ENCODE measurements at regions of chr15 and their contacts with region 1.

Region 1: GRCh38 chr15:56342653-56343052 is 22.6 kb upstream of the TEX9 start:
- DNase-seq: peak; percentile 70
- H3K4me3 Mint-ChIP-seq: no peak overlapping the region
- H3K27ac Mint-ChIP-seq: peak overlapping the region; percentile 10
- H3K4me1 Mint-ChIP-seq: peaks cover 35% of the 10 kb centered on the region
- H3K27me3 Mint-ChIP-seq: no peaks in the 10 kb centered on the region
- CTCF ChIP-seq: no peak

Region 2: DNA sequence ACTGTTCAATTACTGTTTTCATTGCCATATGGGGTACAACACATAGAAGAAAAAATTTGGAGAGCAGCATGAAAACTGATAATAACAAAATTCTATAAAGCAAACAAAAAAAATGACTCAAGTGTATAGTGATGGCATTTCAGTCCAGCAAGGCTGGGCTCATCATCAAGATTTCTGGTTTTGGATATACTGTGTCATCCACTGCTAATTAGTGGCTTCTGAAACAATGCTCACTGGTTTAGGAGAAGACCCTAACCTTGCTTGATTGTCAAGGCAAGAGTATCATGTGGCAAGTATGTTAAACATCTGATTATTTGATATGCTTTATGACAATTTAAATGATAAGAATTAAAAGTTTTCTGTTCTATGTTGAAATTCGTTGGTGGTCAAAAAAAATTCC is 195.9 kb before region 1 on chr15:
- CTCF ChIA-PET with region 1: no interaction called
- POLR2A ChIA-PET with region 1: no interaction called
- intact Hi-C with region 1: no loop called
- DNase-seq: no peak
- H3K4me3 Mint-ChIP-seq: no peak overlapping the region
- H3K27ac Mint-ChIP-seq: no peak overlapping the region
- H3K4me1 Mint-ChIP-seq: peaks cover 20% of the 10 kb centered on the region
- H3K27me3 Mint-ChIP-seq: no peaks in the 10 kb centered on the region
- CTCF ChIP-seq: no peak

Region 3: DNA sequence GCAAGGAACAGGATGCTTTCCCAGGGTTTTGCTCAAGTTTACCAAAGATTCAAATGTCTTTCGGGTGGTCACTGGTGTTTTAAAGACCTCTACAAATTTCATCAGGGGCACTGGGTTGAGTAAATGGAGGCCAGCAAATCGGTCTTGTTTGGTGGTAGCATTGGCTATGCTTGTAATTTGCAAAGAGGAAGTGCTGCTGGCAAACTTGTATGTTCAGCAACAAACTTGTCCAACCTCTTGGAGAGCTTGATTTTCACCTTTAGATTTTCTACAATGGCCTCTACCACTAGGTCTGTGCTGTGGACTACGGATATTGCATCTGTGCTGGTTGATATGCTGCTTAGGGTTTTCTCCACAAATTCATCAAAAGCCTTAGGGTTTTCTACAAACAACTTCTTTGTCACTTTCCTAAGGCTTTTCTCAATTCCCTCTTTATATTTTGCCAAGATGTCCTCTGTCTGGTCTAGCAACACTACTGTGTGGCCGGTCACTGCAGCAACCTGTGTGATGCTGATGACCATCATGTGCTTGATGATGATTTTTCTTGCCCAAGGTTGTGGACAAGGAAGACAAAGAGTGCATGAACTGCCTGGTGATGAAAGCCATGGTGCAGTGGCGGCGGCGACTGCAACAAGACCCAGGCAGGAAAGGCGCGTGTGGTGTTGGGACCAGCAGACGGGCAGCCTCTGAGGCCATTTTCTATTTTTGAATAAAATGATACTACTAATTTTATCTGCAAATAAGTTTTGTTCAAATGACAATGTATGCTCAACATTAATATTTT is 149.8 kb before region 1 on chr15:
- CTCF ChIA-PET with region 1: no interaction called
- POLR2A ChIA-PET with region 1: no interaction called
- intact Hi-C with region 1: no loop called
- DNase-seq: no peak
- H3K4me3 Mint-ChIP-seq: no peak overlapping the region
- H3K27ac Mint-ChIP-seq: no peak overlapping the region
- H3K4me1 Mint-ChIP-seq: peaks cover 11% of the 10 kb centered on the region
- H3K27me3 Mint-ChIP-seq: no peaks in the 10 kb centered on the region
- CTCF ChIP-seq: no peak

Region 4: DNA sequence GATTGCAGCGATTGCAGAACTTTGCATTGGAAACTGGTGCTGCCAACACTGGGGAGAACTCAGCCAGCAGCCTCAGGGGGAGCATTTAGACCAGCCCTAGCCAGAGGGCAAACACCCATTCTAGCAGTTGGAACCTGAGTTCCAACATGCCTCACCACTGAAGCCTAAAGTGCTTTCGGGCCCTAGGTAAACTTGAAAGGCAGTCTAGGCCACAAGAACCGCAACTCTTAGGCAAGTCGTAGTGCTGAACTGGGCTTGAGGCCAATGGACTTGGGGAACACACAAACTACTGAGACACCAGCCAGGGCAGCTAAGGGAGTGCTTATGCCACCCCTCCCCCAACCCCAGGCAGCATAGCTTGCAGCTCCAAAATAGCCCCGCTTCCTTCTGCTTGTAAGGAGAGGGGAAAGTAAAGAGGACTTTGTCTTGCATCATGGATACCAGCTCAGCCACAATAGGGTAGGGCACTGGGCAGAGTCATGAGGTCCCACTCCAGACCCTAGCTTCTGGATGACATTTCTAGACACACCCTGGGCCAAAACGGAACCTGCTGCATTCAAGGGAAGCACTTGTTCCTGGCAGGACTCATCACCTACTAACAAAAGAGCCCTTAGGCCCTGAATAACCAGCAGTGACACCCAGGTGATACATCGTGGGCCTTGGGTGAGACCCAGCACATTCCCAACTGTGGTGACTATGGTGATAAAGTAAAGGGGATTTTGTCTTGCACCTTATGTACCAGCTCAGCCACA is 14.8 kb before region 1 on chr15:
- CTCF ChIA-PET with region 1: interaction called, 3 read pairs
- POLR2A ChIA-PET with region 1: interaction called, 10 read pairs
- intact Hi-C with region 1: no loop called
- DNase-seq: peak; percentile 98
- H3K4me3 Mint-ChIP-seq: peak overlapping the region; percentile 60
- H3K27ac Mint-ChIP-seq: peak overlapping the region; percentile 64
- H3K4me1 Mint-ChIP-seq: peaks cover 38% of the 10 kb centered on the region
- H3K27me3 Mint-ChIP-seq: no peaks in the 10 kb centered on the region
- CTCF ChIP-seq: no peak

Region 5: DNA sequence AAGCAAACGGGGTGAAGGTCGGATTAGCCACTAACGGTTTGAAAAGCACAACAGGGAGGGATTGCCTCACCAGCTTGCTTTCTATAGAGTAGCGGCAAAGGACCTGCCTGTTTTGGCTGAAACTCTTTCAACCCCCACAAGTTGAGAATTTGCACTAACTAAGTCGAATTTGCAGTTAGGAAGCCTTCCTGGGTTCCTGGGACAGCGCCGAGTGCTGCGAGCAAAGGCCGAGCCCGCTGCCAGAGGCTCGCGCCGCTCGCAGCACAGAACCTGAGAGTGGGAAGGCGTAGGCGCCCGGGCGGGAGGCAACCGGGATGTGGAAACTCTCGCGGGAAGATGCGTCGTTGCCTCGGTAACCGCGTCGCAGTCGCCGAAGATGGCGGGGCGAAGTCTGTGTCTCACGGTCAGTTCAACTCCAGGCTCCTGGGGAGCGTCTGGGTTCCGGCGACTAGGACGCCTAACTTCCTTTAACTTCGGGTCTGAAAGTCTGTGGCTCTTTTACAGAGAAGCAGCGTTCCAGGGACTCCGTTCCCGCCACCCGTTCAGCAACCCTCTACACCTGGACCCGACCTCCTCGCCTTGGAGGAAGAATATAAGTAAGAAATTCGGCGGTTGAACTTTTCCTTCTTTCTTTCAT is 22.5 kb after region 1 on chr15 and contains the start of gene TEX9:
- CTCF ChIA-PET with region 1: interaction called, 5 read pairs
- POLR2A ChIA-PET with region 1: interaction called, 12 read pairs
- intact Hi-C with region 1: no loop called
- DNase-seq: peak; percentile 86
- H3K4me3 Mint-ChIP-seq: peak within 1 kb of the TSS; percentile 76
- H3K27ac Mint-ChIP-seq: peak within 1 kb of the TSS; percentile 72
- H3K4me1 Mint-ChIP-seq: peaks cover 33% of the 10 kb centered on the region
- H3K27me3 Mint-ChIP-seq: no peaks in the 10 kb centered on the region
- CTCF ChIP-seq: no peak
- total RNA-seq, gene TEX9: 6.3 and 6.8 TPM in 2 replicates